ENCODE measurements at regions of chr3 and their contacts with region 1.

Region 1: DNA sequence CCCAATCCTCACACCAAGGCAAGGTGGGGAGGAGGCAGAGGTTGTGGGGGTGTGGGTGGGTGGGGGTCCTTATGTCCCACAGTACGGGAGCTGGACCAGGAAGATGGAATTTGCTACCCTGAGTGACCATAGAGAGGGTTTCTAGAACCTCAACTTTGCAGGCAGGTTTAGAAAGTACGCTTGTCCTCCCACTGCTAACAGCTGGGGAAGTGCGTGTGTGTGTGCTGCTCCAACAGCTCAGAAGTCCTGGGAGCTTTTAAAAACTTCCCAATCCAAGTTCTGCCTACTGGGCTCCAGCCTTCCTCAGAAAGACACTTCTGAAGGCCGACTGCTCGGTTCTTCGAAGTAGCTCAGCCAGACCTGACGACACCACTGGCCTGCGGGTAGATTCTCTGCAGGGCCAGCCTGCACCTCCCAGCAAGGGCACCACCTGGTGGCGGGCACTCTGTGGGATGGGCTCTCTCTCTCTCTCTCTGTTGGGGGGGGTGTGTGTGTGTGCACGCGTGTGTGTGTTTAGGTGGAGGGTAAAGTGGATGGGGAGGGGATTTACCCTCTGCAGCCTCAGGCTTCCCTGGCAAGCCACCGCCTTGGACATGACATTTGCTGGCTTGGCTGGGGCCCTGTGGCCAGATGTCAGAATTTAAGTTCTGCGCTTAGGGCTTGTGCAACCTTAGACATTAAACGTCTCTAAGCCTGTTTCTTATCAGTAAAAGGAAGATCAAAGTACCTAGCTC is 15.6 kb downstream of the TMEM158 start:
- DNase-seq: peak; percentile 47 to 70
- ATAC-seq: peak; percentile 96 to 98
- H3K4me3 ChIP-seq: no peak overlapping the region
- H3K27ac ChIP-seq: peak overlapping the region; percentile 58 to 84; a peak in 4 of 6 replicates
- H3K4me1 ChIP-seq: peaks cover 8% of the 10 kb centered on the region; the same call in 2 of the 3 replicates
- CTCF ChIP-seq: peak; percentile 72
- EP300 ChIP-seq: no peak
- POLR2A ChIP-seq: no peak
- RAD21 ChIP-seq: peak; percentile 84 to 86

Region 2: DNA sequence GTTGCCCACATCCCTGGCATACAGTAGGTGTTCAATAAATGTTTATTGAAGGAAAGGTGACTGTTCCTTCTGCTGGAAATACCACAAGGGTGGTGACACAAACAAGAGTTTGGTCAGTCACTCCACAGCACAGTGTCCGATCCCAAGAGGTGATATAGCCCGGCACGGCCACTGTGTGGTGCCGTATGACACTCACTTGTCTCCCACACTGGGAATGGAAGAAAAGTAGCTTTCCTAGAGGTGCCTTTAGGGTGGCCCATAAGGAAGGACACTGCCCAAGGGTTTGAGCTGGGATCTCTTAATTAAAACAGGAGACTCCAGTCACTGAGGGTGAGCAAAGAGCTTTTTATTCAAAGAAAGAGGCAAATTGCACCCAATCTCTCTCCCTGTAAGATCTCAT is 295.5 kb before region 1 on chr3:
- CTCF ChIA-PET with region 1: no interaction called
- POLR2A ChIA-PET with region 1: no interaction called
- DNase-seq: no peak
- ATAC-seq: peak in 1 of 2 experiments; percentile 57; a peak in 3 of 6 replicates
- H3K4me3 ChIP-seq: no peak overlapping the region
- H3K27ac ChIP-seq: no peak overlapping the region
- H3K4me1 ChIP-seq: no peaks in the 10 kb centered on the region
- CTCF ChIP-seq: no peak
- EP300 ChIP-seq: no peak
- POLR2A ChIP-seq: no peak
- RAD21 ChIP-seq: 0 out of 5 replicates have a peak, but pooled peaks of 1 of the 2 experiments have one; percentile 3

Region 3: GRCh38 chr3:45037734-45038455 is 172.6 kb before region 1 on chr3:
- CTCF ChIA-PET with region 1: interaction called, 339 read pairs
- POLR2A ChIA-PET with region 1: interaction called, 5 read pairs
- DNase-seq: peak; percentile 87 to 90
- ATAC-seq: peak; percentile 90 to 95
- H3K4me3 ChIP-seq: no peak overlapping the region
- H3K27ac ChIP-seq: no peak overlapping the region
- H3K4me1 ChIP-seq: peaks cover 9% of the 10 kb centered on the region; the same call in 1 of the 3 replicates
- CTCF ChIP-seq: peak; percentile 94
- EP300 ChIP-seq: no peak
- POLR2A ChIP-seq: no peak
- RAD21 ChIP-seq: peak; percentile 91 to 94

Region 4: GRCh38 chr3:45084820-45085816 is 125.4 kb before region 1 on chr3:
- CTCF ChIA-PET with region 1: interaction called, 13 read pairs
- POLR2A ChIA-PET with region 1: no interaction called
- DNase-seq: no peak
- ATAC-seq: no peak
- H3K4me3 ChIP-seq: no peak overlapping the region
- H3K27ac ChIP-seq: no peak overlapping the region
- H3K4me1 ChIP-seq: no peaks in the 10 kb centered on the region
- CTCF ChIP-seq: no peak
- EP300 ChIP-seq: no peak
- POLR2A ChIP-seq: no peak
- RAD21 ChIP-seq: no peak

Region 5: DNA sequence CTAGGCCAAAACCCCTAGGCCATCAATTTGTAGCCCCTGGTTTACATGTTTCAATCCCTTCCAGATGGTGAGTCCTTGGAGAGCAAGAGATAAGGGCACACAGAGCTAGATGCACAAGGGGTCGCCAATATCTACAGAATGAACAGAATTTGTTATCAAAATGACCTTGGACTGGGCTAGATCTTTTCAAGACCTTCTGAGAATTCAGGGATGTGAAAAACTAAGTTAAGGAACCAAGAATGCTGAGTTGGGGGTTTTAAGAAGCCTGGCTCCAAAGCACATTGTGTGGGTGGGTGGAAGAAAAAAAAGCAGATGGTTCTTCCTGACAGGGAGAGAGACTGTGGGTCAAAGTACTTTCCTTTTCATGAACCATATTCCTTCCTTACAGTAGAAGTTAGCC is 74.5 kb before region 1 on chr3:
- CTCF ChIA-PET with region 1: interaction called, 10 read pairs
- POLR2A ChIA-PET with region 1: no interaction called
- DNase-seq: no peak
- ATAC-seq: no peak
- H3K4me3 ChIP-seq: no peak overlapping the region
- H3K27ac ChIP-seq: peak overlapping the region in 1 of 2 experiments; percentile 93; a peak in 4 of 6 replicates
- H3K4me1 ChIP-seq: peaks cover 23% of the 10 kb centered on the region
- CTCF ChIP-seq: no peak
- EP300 ChIP-seq: no peak
- POLR2A ChIP-seq: no peak
- RAD21 ChIP-seq: no peak

Region 6: GRCh38 chr3:45180051-45180450 is 30.4 kb before region 1 on chr3:
- CTCF ChIA-PET with region 1: interaction called, 12 read pairs
- POLR2A ChIA-PET with region 1: no interaction called
- DNase-seq: no peak
- ATAC-seq: peak in 1 of 2 experiments; percentile 52; a peak in 3 of 6 replicates
- H3K4me3 ChIP-seq: no peak overlapping the region
- H3K27ac ChIP-seq: peak overlapping the region in 1 of 2 experiments; percentile 19; a peak in 3 of 6 replicates
- H3K4me1 ChIP-seq: peaks cover 17% of the 10 kb centered on the region
- CTCF ChIP-seq: no peak
- EP300 ChIP-seq: no peak
- POLR2A ChIP-seq: no peak
- RAD21 ChIP-seq: no peak